ENCODE measurements at regions of chr2 and their contacts with region 1.

Region 1: GRCh38 chr2:112296407-112296806 is 21.0 kb downstream of the ZC3H6 start:
- DNase-seq: no peak
- ATAC-seq: no peak
- H3K4me3 ChIP-seq: no peak overlapping the region
- H3K4me3 Mint-ChIP-seq: no peak overlapping the region
- H3K27ac ChIP-seq: no peak overlapping the region
- H3K27ac Mint-ChIP-seq: no peak overlapping the region
- H3K4me1 ChIP-seq: no peaks in the 10 kb centered on the region
- H3K4me1 Mint-ChIP-seq: peaks cover 20 to 25% (median 22%) of the 10 kb centered on the region in 3 donors
- H3K27me3 ChIP-seq: no peaks in the 10 kb centered on the region
- H3K27me3 Mint-ChIP-seq: no peaks in the 10 kb centered on the region

Region 2: DNA sequence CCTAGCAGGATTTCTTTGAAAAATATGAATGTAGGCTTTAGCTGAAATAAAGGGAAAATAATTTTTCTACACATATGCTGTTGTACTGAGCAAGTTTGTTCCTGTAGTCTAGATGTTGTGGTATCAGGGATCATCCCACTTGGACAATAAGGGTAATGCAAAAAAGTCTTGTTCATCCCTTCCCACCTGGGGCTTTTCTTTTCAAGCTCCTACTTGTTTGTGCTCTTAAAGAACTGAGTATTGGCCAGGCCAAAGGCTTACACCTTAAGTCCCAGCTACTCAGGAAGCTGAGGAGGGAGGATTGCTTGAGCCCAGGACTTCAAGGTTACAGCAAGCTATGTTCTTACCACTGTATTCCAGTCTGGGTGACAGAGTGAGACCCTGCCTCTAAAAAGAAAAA is 14.5 kb after region 1 on chr2:
- CTCF ChIA-PET with region 1: no interaction called
- POLR2A ChIA-PET with region 1: no interaction called
- DNase-seq: no peak
- ATAC-seq: no peak
- H3K4me3 ChIP-seq: no peak overlapping the region
- H3K4me3 Mint-ChIP-seq: no peak overlapping the region
- H3K27ac ChIP-seq: no peak overlapping the region
- H3K27ac Mint-ChIP-seq: no peak overlapping the region
- H3K4me1 ChIP-seq: no peaks in the 10 kb centered on the region
- H3K4me1 Mint-ChIP-seq: no peaks in the 10 kb centered on the region
- H3K27me3 ChIP-seq: no peaks in the 10 kb centered on the region
- H3K27me3 Mint-ChIP-seq: no peaks in the 10 kb centered on the region

Region 3: GRCh38 chr2:112516801-112517200 is 220.4 kb after region 1 on chr2:
- CTCF ChIA-PET with region 1: no interaction called
- POLR2A ChIA-PET with region 1: interaction called in 1 of 2 experiments, 17 read pairs
- DNase-seq: no peak
- ATAC-seq: no peak
- H3K4me3 ChIP-seq: no peak overlapping the region
- H3K4me3 Mint-ChIP-seq: no peak overlapping the region
- H3K27ac ChIP-seq: no peak overlapping the region
- H3K27ac Mint-ChIP-seq: no peak overlapping the region
- H3K4me1 ChIP-seq: no peaks in the 10 kb centered on the region
- H3K4me1 Mint-ChIP-seq: no peaks in the 10 kb centered on the region
- H3K27me3 ChIP-seq: no peaks in the 10 kb centered on the region
- H3K27me3 Mint-ChIP-seq: no peaks in the 10 kb centered on the region